Dendritic cell treated with granulocyte-macrophage colony-stimulating factor and Interleukin-4, amounts not matched to agents 40 ng/mL and 50 ng/mL, for 4 days (primary cell): ENCODE measurements at regions of chr3 and their contacts with region 1.

Region 1: GRCh38 chr3:59575113-59576001 is 525.5 kb upstream of the CFAP20DC start:
- H3K4me3 Mint-ChIP-seq: no peak overlapping the region
- H3K27ac Mint-ChIP-seq: no peak overlapping the region
- H3K4me1 Mint-ChIP-seq: no peaks in the 10 kb centered on the region
- H3K27me3 Mint-ChIP-seq: no peaks in the 10 kb centered on the region

Region 2: DNA sequence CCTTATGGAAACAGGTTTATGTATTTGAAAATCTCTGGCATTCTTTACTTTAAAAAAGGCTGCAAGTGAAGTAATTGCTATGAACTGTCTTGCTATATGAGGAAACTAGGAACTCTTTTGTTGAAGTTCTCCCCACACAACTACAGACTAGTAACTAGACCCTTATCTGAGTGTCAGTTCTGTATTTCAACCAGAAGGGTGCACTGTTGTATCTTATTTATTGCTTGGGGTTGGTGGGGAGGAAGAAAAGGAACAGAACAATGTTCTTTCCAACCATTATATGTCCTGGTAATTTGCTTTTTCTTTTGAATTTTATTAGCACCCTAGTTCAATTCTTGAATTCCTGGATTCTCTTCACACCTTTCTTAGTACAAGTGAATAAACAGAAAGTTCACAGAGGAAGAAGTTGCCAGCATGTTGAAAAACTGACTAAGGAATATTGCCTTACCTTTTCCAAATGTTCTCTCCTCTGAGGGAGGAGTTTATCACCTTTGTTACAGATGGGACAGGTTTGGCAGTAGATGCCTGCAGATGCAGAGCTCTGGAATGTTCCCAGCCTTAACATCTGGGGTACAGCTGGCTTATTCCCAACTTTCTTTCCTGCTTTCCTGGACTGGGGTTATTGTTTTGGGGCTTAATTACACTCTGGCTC is 363.1 kb before region 1 on chr3:
- intact Hi-C with region 1: loop called (anchors 1 kb)
- H3K4me3 Mint-ChIP-seq: no peak overlapping the region
- H3K27ac Mint-ChIP-seq: no peak overlapping the region
- H3K4me1 Mint-ChIP-seq: no peaks in the 10 kb centered on the region
- H3K27me3 Mint-ChIP-seq: peaks cover 4% of the 10 kb centered on the region

Region 3: GRCh38 chr3:59540696-59541095 is 34.7 kb before region 1 on chr3:
- intact Hi-C with region 1: no loop called
- H3K4me3 Mint-ChIP-seq: no peak overlapping the region
- H3K27ac Mint-ChIP-seq: no peak overlapping the region
- H3K4me1 Mint-ChIP-seq: no peaks in the 10 kb centered on the region
- H3K27me3 Mint-ChIP-seq: no peaks in the 10 kb centered on the region

Region 4: DNA sequence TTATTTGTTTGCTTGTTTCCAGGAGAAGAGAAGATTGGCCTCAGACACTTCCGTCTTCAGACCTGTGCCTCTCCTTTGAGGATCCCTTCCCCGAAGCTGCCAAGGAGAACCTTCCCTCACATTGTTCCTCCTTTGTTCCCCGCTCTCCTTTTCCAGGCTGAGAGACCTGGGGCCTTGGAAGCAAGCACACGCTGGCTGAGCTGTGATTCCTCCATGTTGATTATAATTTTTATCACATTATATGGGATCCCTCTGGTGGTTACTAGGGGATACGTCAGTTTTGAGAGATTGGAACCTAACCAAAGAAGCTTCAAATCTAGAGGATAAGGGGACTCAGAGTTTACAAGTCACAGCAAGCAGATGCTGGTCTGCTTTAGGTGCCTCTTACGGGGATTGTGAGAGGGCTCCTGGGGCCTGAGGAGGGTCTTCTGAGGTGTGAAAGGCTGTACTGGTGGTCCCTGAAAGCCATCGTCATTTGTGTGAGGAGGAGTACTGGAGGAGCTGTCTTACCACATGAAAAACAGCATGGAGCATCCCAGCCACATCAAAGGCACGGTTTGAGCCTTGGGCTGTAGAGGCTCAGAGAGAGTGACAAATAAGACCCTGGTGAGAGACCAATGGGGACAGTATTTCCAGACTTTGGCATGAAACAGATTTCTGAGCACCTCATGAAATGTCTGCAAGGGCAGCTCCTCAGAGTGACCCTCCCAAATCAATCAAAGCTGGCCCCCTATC is 234.5 kb after region 1 on chr3:
- intact Hi-C with region 1: loop called (anchors 2 kb)
- H3K4me3 Mint-ChIP-seq: no peak overlapping the region
- H3K27ac Mint-ChIP-seq: no peak overlapping the region
- H3K4me1 Mint-ChIP-seq: no peaks in the 10 kb centered on the region
- H3K27me3 Mint-ChIP-seq: peaks cover 3% of the 10 kb centered on the region

Region 5: GRCh38 chr3:59857589-59858346 is 282.4 kb after region 1 on chr3:
- intact Hi-C with region 1: loop called (anchors 1 kb)
- H3K4me3 Mint-ChIP-seq: no peak overlapping the region
- H3K27ac Mint-ChIP-seq: no peak overlapping the region
- H3K4me1 Mint-ChIP-seq: no peaks in the 10 kb centered on the region
- H3K27me3 Mint-ChIP-seq: no peaks in the 10 kb centered on the region

Region 6: DNA sequence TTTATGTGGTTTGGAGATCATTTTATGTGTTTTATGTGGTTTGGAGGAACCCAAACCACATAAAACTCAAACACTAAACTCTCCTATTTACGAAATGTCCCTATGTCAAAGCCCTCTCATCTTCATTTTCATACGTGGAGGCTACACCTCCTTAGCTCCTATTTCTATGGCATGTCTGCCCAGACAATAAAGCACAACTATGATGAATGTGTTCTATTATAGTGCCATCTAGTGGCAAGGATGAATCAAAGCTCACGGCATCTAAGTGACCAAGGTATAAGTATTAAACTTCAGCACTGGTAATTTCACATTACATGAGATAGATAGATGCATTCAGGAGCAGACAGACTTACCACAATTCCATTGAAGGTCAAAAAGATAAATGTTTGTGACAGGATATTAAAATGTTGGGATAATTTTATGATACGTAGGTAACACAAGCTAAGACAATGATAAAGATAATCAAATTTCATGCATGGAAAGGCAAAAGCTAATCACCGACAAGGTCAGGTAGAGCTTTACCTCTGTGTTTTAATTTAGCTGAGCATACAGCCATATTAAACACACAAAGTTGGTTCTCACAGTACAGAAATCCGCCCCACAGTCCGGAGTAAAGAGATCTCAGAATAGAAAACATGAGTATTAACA is 1806.5 kb after region 1 on chr3:
- intact Hi-C with region 1: loop called (anchors 5 kb)
- H3K4me3 Mint-ChIP-seq: no peak overlapping the region
- H3K27ac Mint-ChIP-seq: no peak overlapping the region
- H3K4me1 Mint-ChIP-seq: peaks cover 5% of the 10 kb centered on the region
- H3K27me3 Mint-ChIP-seq: peaks cover 2% of the 10 kb centered on the region